Naive thymus-derived CD4-positive, alpha-beta T cell (primary cell): ENCODE measurements at regions of chr5 and their contacts with region 1.

Region 1: DNA sequence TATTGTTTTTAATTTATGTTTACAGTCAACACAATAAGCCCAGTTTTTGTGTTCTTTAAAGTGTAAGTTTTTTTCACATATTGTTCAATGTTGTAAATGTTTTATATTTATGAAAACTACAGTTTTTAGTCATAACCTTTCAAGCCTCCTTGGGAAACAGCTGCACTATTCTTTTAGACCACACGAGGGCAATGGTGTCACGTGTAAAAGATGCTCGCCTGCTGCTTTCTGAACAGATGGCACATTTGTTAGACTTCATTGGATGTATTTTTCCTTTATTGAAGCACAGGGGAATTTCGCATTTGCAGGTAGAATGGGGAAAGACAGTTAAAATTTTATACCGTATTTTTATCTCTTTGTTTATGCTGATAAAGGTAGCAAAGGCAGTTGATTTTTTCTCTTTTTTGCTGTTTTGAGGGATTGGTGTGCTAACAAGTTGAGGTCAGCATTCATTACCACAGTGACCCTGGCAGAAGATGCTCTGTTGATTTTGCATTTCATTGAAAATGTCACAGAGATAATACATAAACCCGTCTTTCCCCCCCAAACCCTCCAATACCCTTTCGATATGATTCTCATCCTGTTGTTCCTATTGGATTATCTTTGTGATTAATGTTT is 59.0 kb downstream of the MAT2B start:
- DNase-seq: peak in 8 of 9 donors; percentile 16 to 62 (median 48)
- ATAC-seq: peak; percentile 63
- H3K4me3 ChIP-seq: no peak overlapping the region
- H3K4me3 Mint-ChIP-seq: peak overlapping the region in 2 of 10 donors; percentile 13 to 58
- H3K27ac ChIP-seq: no peak overlapping the region
- H3K27ac Mint-ChIP-seq: no peak overlapping the region
- H3K4me1 ChIP-seq: peaks cover 8 to 9% of the 10 kb centered on the region in 2 donors
- H3K4me1 Mint-ChIP-seq: peaks cover 13 to 33% (median 21%) of the 10 kb centered on the region in 7 donors
- H3K27me3 ChIP-seq: peaks cover 3 to 5% of the 10 kb centered on the region in 2 donors
- H3K27me3 Mint-ChIP-seq: peaks cover 49 to 68% (median 56%) of the 10 kb centered on the region in 5 donors

Region 2: DNA sequence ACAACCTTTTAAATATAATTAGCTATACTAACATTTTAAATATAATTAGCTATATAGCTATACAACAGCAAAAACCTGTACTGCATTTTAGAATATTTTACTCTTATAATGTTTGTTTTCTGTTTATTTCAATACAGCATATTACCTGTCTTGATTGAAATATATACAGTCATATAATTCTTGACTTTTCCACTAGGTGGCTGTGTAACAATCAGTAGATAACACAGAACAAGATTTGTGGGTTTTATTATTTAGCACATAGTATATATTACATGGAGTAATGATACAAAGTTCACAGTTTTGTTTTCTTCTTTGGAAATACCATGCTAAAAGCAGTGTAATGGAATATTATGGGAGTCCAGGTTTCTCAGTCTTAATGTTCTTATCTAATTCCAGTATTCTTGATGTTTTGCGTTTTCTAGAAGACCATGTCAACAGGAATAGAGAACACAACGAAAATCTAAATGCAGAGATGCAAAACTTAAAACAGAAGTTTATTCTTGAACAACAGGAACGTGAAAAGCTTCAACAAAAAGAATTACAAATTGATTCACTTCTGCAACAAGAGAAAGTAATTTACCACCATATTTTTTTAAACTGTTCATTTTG is 90.7 kb before region 1 on chr5:
- CTCF ChIA-PET with region 1: no interaction called
- POLR2A ChIA-PET with region 1: no interaction called
- intact Hi-C with region 1: loop called in 1 of 2 experiments (anchors 2 kb)
- DNase-seq: peak in 4 of 9 donors; percentile 12 to 48 (median 36)
- ATAC-seq: peak; percentile 84
- H3K4me3 ChIP-seq: no peak overlapping the region
- H3K4me3 Mint-ChIP-seq: no peak overlapping the region
- H3K27ac ChIP-seq: no peak overlapping the region
- H3K27ac Mint-ChIP-seq: no peak overlapping the region
- H3K4me1 ChIP-seq: no peaks in the 10 kb centered on the region
- H3K4me1 Mint-ChIP-seq: peaks cover 0 to 13% (median 0%) of the 10 kb centered on the region in 7 donors
- H3K27me3 ChIP-seq: no peaks in the 10 kb centered on the region
- H3K27me3 Mint-ChIP-seq: no peaks in the 10 kb centered on the region

Region 3: DNA sequence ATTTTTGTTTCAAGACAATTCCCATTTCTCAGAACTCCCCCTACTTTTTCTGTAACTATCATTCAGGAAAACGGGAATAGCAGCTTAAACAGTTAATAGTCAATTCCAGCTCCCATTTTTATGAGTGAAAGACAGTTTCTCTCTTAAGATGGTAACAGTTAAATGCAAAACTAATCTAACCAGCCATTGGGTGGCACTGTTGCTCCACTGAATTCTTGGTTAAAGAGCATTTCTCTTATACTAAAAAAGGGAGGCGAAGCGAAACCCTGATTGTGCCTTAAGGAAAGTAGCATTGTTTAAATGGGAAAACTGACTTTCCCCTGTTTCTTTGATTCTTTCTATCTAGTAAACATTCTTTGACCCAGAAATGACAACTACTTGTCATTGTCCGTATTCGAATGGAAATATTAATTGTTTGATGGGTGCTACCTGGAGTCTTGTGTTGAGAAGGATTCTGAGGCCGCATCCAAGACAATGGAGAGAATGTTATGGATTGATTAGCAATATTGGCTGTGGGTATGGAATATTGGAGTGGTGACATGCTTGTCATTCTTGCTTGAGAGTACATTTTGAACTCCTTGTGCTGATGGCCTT is 448.7 kb after region 1 on chr5:
- CTCF ChIA-PET with region 1: no interaction called
- POLR2A ChIA-PET with region 1: no interaction called
- intact Hi-C with region 1: loop called in 1 of 2 experiments (anchors 10 kb)
- DNase-seq: peak in 1 of 9 donors; percentile 22
- ATAC-seq: peak; percentile 41
- H3K4me3 ChIP-seq: no peak overlapping the region
- H3K4me3 Mint-ChIP-seq: no peak overlapping the region
- H3K27ac ChIP-seq: no peak overlapping the region
- H3K27ac Mint-ChIP-seq: no peak overlapping the region
- H3K4me1 ChIP-seq: no peaks in the 10 kb centered on the region
- H3K4me1 Mint-ChIP-seq: peaks cover 0 to 3% (median 0%) of the 10 kb centered on the region in 7 donors
- H3K27me3 ChIP-seq: no peaks in the 10 kb centered on the region
- H3K27me3 Mint-ChIP-seq: no peaks in the 10 kb centered on the region

Region 4: GRCh38 chr5:165209086-165209727 is 1644.8 kb after region 1 on chr5:
- CTCF ChIA-PET with region 1: no interaction called
- POLR2A ChIA-PET with region 1: no interaction called
- intact Hi-C with region 1: loop called in 1 of 2 experiments (anchors 1 kb)
- DNase-seq: no peak
- ATAC-seq: no peak
- H3K4me3 ChIP-seq: no peak overlapping the region
- H3K4me3 Mint-ChIP-seq: no peak overlapping the region
- H3K27ac ChIP-seq: no peak overlapping the region
- H3K27ac Mint-ChIP-seq: no peak overlapping the region
- H3K4me1 ChIP-seq: no peaks in the 10 kb centered on the region
- H3K4me1 Mint-ChIP-seq: peaks cover 0 to 2% (median 0%) of the 10 kb centered on the region in 7 donors
- H3K27me3 ChIP-seq: no peaks in the 10 kb centered on the region
- H3K27me3 Mint-ChIP-seq: no peaks in the 10 kb centered on the region